Thyroid gland (tissue), 4 donors: ENCODE measurements at regions of chr11 and their contacts with region 1.

Region 1: DNA sequence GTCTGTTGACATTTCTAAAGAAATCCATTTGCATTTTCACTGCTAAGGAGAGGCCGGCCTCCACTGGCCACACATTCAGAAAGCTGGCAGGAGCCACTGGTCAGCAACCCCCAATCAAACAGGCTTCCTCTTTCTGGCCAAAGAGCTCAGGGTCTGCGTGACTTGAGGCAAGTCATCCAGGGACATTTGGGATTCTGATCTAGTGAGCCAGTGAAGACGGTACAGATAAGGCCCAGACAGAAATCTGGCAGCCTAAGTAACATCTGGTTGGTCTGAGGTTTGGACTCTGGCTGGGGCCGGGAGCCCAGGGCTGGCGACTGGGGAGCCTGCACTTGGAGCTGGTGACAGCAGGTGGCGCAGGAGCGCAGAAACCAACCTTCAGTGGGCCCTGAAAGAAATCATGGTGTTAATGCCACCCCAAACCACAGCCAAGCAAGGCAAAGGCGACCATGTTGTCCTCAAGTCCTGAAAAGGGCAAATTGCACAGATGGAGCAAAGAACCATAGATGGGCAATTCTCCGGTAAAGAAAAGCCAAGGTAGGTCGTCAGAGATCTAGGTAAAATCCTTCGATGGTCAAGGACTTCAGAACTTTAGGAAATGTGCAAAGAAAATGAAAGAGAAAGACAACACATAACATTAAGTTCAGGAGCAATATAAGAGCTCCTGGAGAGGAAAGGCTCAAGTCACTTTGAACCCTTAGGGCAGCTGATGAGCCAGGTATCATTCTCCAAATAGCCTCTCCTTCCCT is 99.4 kb upstream of the BLID start:
- DNase-seq: peak; percentile 69 to 76
- H3K4me3 ChIP-seq: no peak overlapping the region
- H3K27ac ChIP-seq: peak overlapping the region; percentile 16 to 59 (median 26)
- H3K4me1 ChIP-seq: peaks cover 13 to 26% of the 10 kb centered on the region in 2 donors
- H3K27me3 ChIP-seq: no peaks in the 10 kb centered on the region
- CTCF ChIP-seq: peak; percentile 80 to 95 (median 92)
- POLR2A ChIP-seq: no peak

Region 2: DNA sequence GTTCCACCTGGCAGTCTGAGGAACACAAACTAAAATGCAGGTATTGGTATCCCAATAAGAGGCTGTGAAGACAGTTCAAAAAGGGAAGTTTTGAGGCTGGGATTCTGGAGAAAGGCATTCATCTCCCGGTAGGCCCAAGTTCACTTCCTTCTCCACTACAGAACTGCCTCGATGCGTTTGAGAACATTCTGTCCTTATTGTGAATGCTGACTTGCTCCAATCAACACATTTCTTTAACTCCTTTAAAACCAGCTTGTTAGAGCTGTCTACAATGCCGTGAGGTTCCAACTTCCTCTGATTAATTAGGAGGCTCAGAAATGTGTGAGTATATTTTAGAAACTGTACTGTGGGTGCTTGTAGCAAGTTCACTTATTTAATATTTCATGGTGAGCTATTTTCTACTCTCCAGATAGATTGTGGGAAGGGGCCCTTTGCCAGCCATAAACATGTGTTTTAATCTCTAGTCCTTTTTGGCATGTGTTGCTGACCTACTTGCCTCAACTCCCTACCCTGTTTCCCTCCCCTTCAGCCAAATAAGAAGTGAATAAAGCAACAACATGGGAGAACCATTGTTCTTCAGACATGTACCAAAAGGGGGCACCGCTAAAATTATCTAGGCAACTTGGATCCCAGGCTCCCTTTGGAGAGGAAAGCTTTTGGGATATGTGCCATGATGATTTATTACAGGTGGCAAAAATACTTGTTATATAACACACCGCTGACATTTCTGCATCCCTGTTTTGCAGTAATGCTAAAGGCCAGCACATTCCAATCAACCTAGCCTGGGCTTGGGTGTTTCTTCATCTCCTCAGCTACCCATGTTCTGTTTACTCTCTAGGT is 345.0 kb before region 1 on chr11:
- intact Hi-C with region 1: no loop called
- DNase-seq: no peak
- H3K4me3 ChIP-seq: no peak overlapping the region
- H3K27ac ChIP-seq: no peak overlapping the region
- H3K4me1 ChIP-seq: no peaks in the 10 kb centered on the region
- H3K27me3 ChIP-seq: no peaks in the 10 kb centered on the region
- CTCF ChIP-seq: no peak
- POLR2A ChIP-seq: no peak

Region 3: DNA sequence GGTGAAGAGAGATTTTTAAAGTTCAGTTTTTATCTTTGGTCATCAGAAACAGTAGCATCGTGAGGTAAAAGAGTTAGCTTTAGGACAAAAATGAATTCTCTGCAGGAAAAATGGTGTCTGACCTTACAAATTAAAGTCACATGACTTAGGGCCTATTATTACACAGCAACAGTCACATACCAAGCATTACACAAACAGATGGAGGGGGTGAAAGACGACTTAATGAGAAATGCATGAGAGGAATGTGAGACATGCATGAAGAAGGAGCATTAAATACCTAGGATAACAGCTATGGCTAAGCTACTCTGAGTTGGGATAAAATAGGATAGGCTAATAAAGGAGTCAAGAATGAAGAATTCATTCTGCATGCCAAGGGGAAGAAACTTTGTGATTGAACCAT is 176.9 kb before region 1 on chr11:
- intact Hi-C with region 1: no loop called
- DNase-seq: no peak
- H3K4me3 ChIP-seq: no peak overlapping the region
- H3K27ac ChIP-seq: no peak overlapping the region
- H3K4me1 ChIP-seq: peaks cover 7 to 12% of the 10 kb centered on the region in 2 donors
- H3K27me3 ChIP-seq: no peaks in the 10 kb centered on the region
- CTCF ChIP-seq: no peak
- POLR2A ChIP-seq: no peak

Region 4: GRCh38 chr11:122505304-122506006 is 290.0 kb after region 1 on chr11:
- intact Hi-C with region 1: loop called (anchors 2 kb)
- DNase-seq: peak; percentile 80 to 83
- H3K4me3 ChIP-seq: no peak overlapping the region
- H3K27ac ChIP-seq: no peak overlapping the region
- H3K4me1 ChIP-seq: no peaks in the 10 kb centered on the region
- H3K27me3 ChIP-seq: no peaks in the 10 kb centered on the region
- CTCF ChIP-seq: peak; percentile 44 to 91 (median 82)
- POLR2A ChIP-seq: no peak